Cardiac septum (tissue), 1 donor: ENCODE measurements at regions of chrX and their contacts with region 1.

Region 1: GRCh38 chrX:17590892-17591740 is 146.2 kb upstream of the SCML1 start:
- DNase-seq: no peak

Region 2: DNA sequence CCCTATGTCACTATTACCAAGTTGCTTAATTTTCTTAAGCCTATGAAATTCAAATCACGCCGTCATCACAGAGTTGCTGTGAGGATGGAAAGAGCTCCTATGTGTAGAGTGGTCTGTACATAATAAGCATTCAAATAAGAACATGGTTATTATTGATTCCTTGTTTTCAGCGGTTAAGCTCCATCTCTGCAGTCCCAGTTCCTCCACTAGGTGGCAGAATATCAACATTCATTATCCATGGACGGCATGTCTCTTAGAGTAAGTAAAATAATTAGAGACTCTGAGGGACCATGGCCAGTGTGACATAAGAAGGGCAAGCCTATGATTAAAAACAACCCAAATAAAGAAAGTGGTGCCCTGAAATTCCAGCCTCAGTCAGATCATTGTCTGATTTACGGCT is 348.6 kb before region 1 on chrX:
- intact Hi-C with region 1: loop called (anchors 5 kb)
- DNase-seq: no peak

Region 3: GRCh38 chrX:17374619-17375366 is 216.3 kb before region 1 on chrX and contains the start of gene NHS:
- intact Hi-C with region 1: loop called (anchors 5 kb)
- DNase-seq: no peak
- total RNA-seq, gene NHS: 2.6 TPM

Region 4: GRCh38 chrX:17535229-17535628 is 55.9 kb before region 1 on chrX:
- intact Hi-C with region 1: loop called (anchors 5 kb)
- DNase-seq: no peak